ENCODE measurements at regions of chr6 and their contacts with region 1.

Region 1: DNA sequence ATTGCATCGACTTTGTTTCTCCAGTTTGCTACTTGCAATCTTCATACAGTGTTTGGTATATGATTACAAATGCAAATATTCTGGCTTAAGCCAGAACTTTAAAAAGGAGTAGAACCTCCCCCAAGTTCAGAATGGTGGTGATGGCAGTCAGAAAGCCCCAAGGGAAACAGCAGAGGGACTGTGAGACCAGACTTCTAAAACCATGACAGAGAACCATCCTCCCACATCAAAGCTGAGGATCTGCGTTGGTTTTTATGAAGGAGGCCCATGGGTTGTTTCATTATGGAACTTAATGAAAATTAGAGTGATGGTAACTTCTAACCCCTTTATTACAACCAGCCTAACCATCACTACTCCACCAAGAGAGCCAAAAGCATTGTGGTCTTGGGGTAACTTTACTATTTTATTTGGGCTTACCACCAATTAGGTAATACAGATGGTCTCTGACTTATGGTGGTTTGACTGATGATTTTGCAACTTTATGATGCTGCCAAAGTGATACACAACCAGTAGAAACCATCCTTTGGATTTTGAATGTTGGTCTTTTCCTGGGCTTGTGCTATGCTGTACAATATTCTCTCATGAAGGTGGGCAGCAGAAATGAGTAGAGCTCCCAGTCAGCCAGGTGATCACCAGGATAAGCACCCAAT is 10.9 kb upstream of the MRS2 start:
- DNase-seq: no peak
- H3K4me3 ChIP-seq: no peak overlapping the region
- H3K27ac ChIP-seq: no peak overlapping the region
- H3K27me3 ChIP-seq: peaks cover 5% of the 10 kb centered on the region
- CTCF ChIP-seq: no peak

Region 2: DNA sequence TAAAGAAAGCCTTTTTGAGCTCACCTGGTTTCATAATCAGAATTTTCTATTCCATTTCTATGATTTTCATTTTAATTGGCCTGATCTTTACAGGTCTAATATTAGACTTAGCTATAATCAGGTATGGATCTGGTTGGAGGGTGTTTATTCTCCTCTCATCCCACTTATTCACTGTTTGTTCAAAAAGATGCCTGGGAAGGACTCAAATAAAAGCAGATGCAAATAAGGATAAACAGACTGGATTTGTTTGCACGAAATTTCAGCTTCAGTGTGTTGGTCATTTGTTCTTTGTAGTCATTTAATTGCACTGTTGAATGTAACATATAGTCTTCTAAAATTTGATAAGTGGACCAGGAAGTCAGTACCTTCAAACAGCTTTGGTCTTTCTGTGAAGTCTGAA is 398.7 kb before region 1 on chr6:
- CTCF ChIA-PET with region 1: interaction called, 18 read pairs
- POLR2A ChIA-PET with region 1: no interaction called
- DNase-seq: no peak
- H3K4me3 ChIP-seq: no peak overlapping the region
- H3K27ac ChIP-seq: no peak overlapping the region
- H3K27me3 ChIP-seq: no peaks in the 10 kb centered on the region
- CTCF ChIP-seq: no peak

Region 3: DNA sequence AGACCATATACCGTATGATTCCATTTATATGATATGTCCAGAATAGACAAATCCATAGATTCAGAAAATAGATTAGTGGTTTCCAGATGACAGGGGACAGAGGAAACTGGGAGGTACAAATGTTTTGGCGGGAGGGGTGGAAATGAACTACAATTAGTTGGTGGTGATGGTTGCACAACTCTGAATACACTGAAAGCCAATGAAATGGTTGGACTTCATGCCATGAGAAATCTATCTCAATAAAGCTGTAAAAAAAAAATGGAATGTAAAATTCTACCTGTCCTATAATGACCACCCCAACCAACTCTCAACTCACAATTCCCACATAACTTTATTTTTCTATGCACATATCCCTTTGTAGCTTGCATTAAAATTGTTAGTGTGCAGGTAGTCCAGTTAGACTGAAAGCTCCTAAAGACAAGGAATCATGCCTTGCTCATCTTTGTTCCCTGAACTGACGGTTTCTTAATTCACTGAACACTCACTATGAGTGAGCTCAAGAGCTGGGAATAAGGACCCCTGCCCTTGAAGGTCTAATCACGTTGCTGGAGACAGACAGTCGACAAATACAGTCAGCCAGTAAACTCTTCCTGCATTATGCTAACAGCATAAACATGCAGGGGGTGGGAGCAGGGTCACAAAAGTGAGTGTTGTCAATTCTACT is 35.4 kb before region 1 on chr6:
- CTCF ChIA-PET with region 1: interaction called, 10 read pairs
- POLR2A ChIA-PET with region 1: no interaction called
- DNase-seq: no peak
- H3K4me3 ChIP-seq: no peak overlapping the region
- H3K27ac ChIP-seq: no peak overlapping the region
- H3K27me3 ChIP-seq: peaks cover 12% of the 10 kb centered on the region
- CTCF ChIP-seq: no peak

Region 4: GRCh38 chr6:24425091-24425490 is 33.2 kb after region 1 on chr6:
- CTCF ChIA-PET with region 1: no interaction called
- POLR2A ChIA-PET with region 1: no interaction called
- DNase-seq: no peak
- H3K4me3 ChIP-seq: no peak overlapping the region
- H3K27ac ChIP-seq: no peak overlapping the region
- H3K27me3 ChIP-seq: no peaks in the 10 kb centered on the region
- CTCF ChIP-seq: no peak

Measured in AG04450 (cell line).